Esophagus muscularis mucosa (tissue), 4 donors: ENCODE measurements at regions of chr4 and their contacts with region 1.

Region 1: GRCh38 chr4:35760807-35761206 is 483.5 kb downstream of the ARAP2 start:
- DNase-seq: no peak
- H3K4me3 ChIP-seq: no peak overlapping the region
- H3K27ac ChIP-seq: no peak overlapping the region
- H3K4me1 ChIP-seq: no peaks in the 10 kb centered on the region
- H3K27me3 ChIP-seq: no peaks in the 10 kb centered on the region
- CTCF ChIP-seq: no peak
- EP300 ChIP-seq: no peak
- POLR2A ChIP-seq: no peak

Region 2: DNA sequence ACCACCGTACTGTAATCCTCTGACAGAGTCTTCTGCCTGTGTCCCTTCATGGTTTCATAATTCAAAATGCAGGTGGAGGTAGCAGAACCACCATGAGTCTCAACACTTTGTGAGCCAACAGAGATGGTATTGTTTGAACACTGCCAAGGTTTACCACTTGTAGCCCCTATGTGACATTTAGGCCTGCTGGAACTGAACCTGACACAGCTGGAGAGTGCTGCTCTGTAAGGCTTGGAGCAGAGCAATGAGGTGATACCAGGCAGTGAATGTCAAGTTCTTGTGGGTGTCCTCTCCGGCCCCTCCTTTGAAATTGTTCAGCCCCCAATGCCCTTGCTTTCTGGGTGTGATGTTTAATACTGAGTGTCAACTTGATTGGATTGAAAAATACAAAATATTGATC is 559.4 kb before region 1 on chr4:
- intact Hi-C with region 1: no loop called
- DNase-seq: no peak
- H3K4me3 ChIP-seq: no peak overlapping the region
- H3K27ac ChIP-seq: no peak overlapping the region
- H3K4me1 ChIP-seq: no peaks in the 10 kb centered on the region
- H3K27me3 ChIP-seq: no peaks in the 10 kb centered on the region
- CTCF ChIP-seq: no peak
- EP300 ChIP-seq: no peak
- POLR2A ChIP-seq: no peak

Region 3: GRCh38 chr4:35739308-35739707 is 21.5 kb before region 1 on chr4:
- intact Hi-C with region 1: loop called (anchors 2 kb)
- DNase-seq: no peak
- H3K4me3 ChIP-seq: no peak overlapping the region
- H3K27ac ChIP-seq: no peak overlapping the region
- H3K4me1 ChIP-seq: no peaks in the 10 kb centered on the region
- H3K27me3 ChIP-seq: no peaks in the 10 kb centered on the region
- CTCF ChIP-seq: no peak
- EP300 ChIP-seq: no peak
- POLR2A ChIP-seq: no peak